PC-3 (cell line): ENCODE measurements at regions of chr13 and their contacts with region 1.

Region 1: GRCh38 chr13:31742097-31742734 is 2.9 kb downstream of the RXFP2 start:
- DNase-seq: peak; percentile 67
- ATAC-seq: peak; percentile 73
- H3K4me3 ChIP-seq: no peak overlapping the region
- H3K27ac ChIP-seq: no peak overlapping the region
- H3K4me1 ChIP-seq: no peaks in the 10 kb centered on the region
- H3K27me3 ChIP-seq: peaks cover 53% of the 10 kb centered on the region
- CTCF ChIP-seq: peak; percentile 93

Region 2: DNA sequence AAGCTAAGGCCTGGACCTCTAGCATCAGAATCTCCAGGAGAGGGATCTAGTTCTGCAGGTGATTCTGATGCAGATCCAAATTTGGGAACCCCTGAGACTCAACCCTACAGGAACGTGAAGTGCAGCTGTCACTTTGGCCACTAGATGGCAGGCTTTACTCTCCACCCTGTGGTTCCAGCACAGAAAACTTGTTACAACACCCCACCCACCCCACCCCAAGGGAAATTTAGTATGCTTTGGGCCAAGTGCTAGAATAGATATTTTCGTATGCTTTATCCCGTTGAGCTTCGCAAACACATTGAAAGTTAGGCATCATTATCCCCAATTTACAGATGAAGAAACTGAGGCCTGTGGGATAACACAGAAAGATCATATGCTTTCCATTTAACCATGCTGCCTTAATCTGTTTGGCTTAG is 310.5 kb before region 1 on chr13:
- CTCF ChIA-PET with region 1: no interaction called
- POLR2A ChIA-PET with region 1: no interaction called
- intact Hi-C with region 1: loop called (anchors 1 kb)
- DNase-seq: peak; percentile 58
- ATAC-seq: peak; percentile 65
- H3K4me3 ChIP-seq: no peak overlapping the region
- H3K27ac ChIP-seq: no peak overlapping the region
- H3K4me1 ChIP-seq: no peaks in the 10 kb centered on the region
- H3K27me3 ChIP-seq: peaks cover 32% of the 10 kb centered on the region
- CTCF ChIP-seq: peak; percentile 60

Region 3: DNA sequence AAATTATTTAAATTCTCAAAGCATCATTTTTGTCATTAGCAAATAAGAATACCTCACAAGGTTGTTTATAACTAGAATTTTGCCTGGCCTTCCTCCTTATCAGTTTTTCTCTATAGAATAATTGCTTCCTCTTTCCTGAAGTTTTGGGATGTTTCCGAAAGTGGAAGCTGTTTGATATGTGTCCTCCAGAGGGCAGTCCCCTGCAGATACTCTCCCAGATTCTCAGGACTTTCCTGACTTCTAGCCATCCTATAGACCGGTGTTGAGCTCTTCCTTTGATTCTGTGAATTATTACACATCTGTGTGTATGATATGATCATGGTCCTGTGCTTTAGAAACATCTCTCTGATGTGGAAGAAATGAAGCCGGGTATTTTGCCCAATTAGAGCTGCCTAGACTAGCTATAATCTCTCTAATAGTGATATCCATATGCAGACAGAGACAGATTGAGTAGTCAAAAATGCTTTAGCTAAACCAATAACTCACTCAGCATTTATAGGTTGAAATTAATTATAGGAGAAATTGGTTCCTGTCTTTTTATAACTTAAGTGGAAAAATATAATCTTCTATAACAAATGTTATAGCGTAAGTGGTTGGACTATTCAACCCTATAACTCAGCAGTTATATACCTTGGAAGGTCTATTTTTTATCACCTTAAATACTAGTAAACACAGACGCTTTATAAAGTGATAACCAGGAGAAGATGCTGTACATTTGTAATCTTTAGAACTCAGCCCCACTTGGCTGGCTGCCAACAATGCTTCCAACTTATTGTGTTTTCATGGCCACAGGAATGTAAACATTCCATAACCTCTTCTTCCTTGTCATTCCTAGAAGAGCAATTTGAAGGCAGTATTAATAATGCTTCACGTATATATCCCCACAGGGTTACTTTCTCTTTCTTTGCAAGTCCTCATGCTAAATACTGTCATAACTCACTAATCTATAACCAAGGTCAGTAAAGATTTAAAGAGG is 203.9 kb before region 1 on chr13:
- CTCF ChIA-PET with region 1: no interaction called
- POLR2A ChIA-PET with region 1: no interaction called
- intact Hi-C with region 1: loop called (anchors 5 kb)
- DNase-seq: peak; percentile 59
- ATAC-seq: no peak
- H3K4me3 ChIP-seq: no peak overlapping the region
- H3K27ac ChIP-seq: no peak overlapping the region
- H3K4me1 ChIP-seq: no peaks in the 10 kb centered on the region
- H3K27me3 ChIP-seq: no peaks in the 10 kb centered on the region; the same call in 1 of the 2 replicates
- CTCF ChIP-seq: peak; percentile 64

Region 4: DNA sequence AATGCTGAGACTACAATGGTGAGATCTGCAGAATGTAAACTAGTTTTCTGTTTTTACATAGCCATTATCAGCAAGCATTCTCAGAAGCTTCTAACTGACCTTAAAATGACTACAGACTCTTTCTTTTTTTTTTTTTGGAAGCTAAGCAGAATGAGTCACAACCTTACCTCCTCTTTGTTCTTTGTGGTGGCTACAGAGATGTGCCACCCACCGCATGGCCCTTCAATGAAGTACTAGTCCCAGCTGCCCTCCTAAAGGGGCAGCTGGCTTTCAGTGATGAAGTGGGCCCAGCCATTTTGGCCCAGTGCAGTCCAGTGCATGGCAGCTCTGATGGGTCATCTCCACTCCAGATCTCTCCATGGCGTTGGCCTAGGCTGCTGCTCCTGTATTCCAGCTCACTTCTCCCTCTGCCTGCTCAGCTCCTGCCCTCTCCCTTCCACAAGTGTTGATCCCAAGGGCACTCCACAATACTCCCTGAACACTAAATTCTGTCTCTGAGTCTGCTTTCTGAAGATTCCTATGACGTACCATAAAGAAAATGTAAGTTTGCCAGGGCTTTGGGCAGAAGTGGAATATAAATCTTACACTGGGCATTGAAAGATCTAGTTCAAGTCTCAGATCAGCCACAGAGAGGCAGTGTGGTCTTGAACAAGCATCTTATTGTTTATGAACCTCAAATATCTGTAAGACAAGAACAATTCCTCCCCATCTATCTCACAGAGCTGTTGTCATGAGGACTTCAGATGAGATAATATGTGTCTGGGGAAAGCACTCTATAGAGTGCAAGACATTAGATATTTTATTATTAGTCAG is 82.7 kb after region 1 on chr13:
- CTCF ChIA-PET with region 1: no interaction called
- POLR2A ChIA-PET with region 1: no interaction called
- intact Hi-C with region 1: no loop called
- DNase-seq: peak; percentile 19
- ATAC-seq: no peak
- H3K4me3 ChIP-seq: no peak overlapping the region
- H3K27ac ChIP-seq: no peak overlapping the region
- H3K4me1 ChIP-seq: no peaks in the 10 kb centered on the region
- H3K27me3 ChIP-seq: peaks cover 32% of the 10 kb centered on the region
- CTCF ChIP-seq: peak; percentile 19; the same call in 1 of the 2 replicates

Region 5: DNA sequence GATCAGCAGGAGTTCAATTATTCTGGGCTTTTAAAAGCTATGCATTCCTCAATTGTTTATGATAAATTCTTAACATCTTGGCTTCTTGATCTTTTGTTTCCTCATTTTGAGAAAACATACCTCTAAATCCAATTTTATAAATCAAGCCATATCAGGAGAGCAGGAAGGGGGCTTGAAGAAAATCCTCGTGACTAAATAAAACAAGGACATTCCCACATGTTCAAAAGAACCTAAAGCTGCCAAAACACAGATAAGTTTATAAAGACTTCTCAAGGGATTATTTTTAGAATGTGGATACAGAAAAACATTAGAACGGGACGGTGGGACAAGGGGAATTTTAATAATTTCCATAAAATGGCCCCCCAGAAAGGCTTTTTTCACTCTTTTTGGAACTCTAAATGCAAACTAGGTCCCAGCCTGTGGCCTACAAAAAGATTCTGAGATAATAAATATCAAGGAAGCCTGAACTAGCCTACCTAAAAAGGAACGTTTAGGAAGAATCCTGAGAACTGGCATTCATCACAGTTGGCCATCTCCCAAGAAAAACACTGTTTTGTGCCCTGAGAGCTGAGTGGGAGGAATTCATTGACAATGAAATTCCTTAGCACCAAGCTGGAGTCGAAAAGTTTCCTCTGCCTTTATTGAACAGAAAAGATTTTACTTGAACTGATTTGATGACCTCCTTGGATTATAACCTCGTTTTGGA is 542.9 kb after region 1 on chr13:
- CTCF ChIA-PET with region 1: no interaction called
- POLR2A ChIA-PET with region 1: no interaction called
- intact Hi-C with region 1: no loop called
- DNase-seq: peak; percentile 82
- ATAC-seq: peak; percentile 33; the same call in 1 of the 2 replicates
- H3K4me3 ChIP-seq: peak overlapping the region; percentile 16; the same call in 1 of the 2 replicates
- H3K27ac ChIP-seq: no peak overlapping the region
- H3K4me1 ChIP-seq: peaks cover 12% of the 10 kb centered on the region; the same call in 1 of the 2 replicates
- H3K27me3 ChIP-seq: no peaks in the 10 kb centered on the region
- CTCF ChIP-seq: no peak